A549 (cell line): ENCODE measurements at regions of chr16 and their contacts with region 1.

Region 1: GRCh38 chr16:11396241-11397048 is 51.2 kb downstream of the RMI2 start:
- DNase-seq: peak; percentile 67 to 94
- ATAC-seq: peak; percentile 74 to 93
- H3K4me3 ChIP-seq: no peak overlapping the region
- H3K27ac ChIP-seq: peak overlapping the region; percentile 73 to 81
- H3K4me1 ChIP-seq: peaks cover 4% of the 10 kb centered on the region; the same call in 2 of the 3 replicates
- CTCF ChIP-seq: peak; percentile 93
- EP300 ChIP-seq: no peak
- POLR2A ChIP-seq: no peak
- RAD21 ChIP-seq: peak; percentile 99

Region 2: DNA sequence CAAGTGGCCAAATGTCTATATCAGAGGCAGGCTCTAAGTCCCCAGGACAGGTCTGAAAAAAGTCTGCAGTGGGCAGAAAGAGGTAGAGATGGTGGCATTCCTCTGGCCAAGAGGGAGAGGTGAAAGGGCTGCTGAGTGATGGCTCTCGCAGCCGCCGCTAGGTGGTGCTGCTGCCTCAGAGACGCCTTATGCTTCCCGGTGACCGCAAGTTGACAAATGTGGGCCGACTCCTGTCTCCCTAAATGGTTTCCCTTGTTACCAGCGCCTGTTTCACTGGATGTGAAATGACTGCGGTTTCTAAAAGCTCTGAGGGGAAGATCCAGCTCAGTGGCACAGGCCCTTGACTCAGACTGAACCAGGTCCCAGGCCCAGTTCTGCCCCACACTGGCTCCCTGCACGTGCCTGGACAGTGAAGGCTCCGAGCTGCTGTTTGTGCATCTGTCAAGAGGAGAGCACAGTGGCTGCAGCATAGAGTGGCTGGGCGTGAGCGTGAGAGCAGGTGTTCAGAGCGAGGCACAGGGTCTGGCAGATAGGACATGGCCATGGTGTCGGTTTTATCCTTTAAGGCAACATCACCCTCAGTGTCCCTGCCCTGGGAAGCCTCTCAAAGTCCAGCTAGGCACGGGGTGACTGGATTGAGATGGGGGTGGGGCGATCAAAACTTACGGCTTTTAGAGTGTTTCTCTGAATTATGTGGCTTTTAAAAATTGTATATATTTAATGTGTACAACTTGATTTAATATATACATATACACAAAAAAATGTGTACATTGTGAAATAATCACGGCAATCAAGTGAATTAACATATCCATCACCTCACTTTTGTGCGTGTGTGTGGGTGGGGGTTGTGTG is 432.2 kb before region 1 on chr16:
- CTCF ChIA-PET with region 1: interaction called, 16 read pairs
- POLR2A ChIA-PET with region 1: no interaction called
- DNase-seq: peak; percentile 70 to 77
- ATAC-seq: peak; percentile 93 to 99
- H3K4me3 ChIP-seq: no peak overlapping the region
- H3K27ac ChIP-seq: no peak overlapping the region
- H3K4me1 ChIP-seq: 0 out of 3 replicates have a peak, but pooled peaks cover 3% of the 10 kb centered on the region
- CTCF ChIP-seq: peak; percentile 93
- EP300 ChIP-seq: no peak
- POLR2A ChIP-seq: no peak
- RAD21 ChIP-seq: peak; percentile 87 to 88

Region 3: DNA sequence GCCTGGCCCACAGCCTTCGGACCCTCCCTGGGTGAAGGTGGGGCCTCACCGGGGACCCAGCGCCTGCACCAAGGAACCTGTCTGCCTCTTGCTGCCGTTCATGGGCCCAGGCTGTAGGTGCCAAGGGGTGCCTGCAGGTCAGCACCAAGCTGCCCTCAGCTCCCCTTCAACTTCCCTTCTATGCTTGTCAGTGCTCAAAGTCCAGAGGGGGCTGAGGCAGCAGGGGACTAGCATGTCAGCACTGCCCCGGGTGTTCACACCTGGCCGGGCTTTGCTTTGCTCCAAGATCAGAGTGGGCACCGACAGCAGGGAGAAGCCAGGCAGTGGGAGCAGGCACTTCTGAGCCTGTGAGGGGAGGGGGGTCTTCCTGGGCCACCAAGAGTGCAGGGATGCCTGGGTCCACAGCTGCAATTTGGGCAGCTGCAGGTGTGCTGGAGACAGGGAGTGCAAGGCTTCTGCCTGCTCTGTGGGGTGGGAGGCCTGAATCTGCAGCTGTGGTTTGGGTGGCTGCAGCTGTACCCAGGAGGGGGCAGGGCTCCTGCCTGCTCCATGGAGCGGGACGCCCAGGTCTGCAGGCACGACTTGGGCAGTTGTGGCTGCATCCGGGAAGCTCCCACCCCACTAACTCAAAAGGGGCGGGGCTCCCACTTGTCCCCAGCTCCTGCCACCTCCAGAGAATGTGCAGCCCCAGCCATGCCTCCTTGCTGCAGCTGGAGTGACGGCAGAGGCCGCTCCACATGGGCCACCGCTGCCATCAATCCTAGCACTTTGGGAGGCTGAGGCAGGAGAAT is 87.8 kb before region 1 on chr16:
- CTCF ChIA-PET with region 1: no interaction called
- POLR2A ChIA-PET with region 1: no interaction called
- DNase-seq: no peak
- ATAC-seq: peak in 1 of 2 experiments; percentile 20; a peak in 2 of 6 replicates
- H3K4me3 ChIP-seq: no peak overlapping the region
- H3K27ac ChIP-seq: no peak overlapping the region
- H3K4me1 ChIP-seq: peaks cover 15% of the 10 kb centered on the region
- CTCF ChIP-seq: no peak
- EP300 ChIP-seq: no peak
- POLR2A ChIP-seq: no peak
- RAD21 ChIP-seq: no peak

Region 4: GRCh38 chr16:11417487-11417886 is 21.0 kb after region 1 on chr16:
- CTCF ChIA-PET with region 1: interaction called, 300 read pairs
- POLR2A ChIA-PET with region 1: no interaction called
- DNase-seq: no peak
- ATAC-seq: no peak; a peak in 2 of 6 replicates
- H3K4me3 ChIP-seq: no peak overlapping the region
- H3K27ac ChIP-seq: no peak overlapping the region
- H3K4me1 ChIP-seq: no peaks in the 10 kb centered on the region
- CTCF ChIP-seq: no peak
- EP300 ChIP-seq: no peak
- POLR2A ChIP-seq: no peak
- RAD21 ChIP-seq: no peak

Region 5: GRCh38 chr16:11497851-11498289 is 101.4 kb after region 1 on chr16:
- CTCF ChIA-PET with region 1: interaction called, 14 read pairs
- POLR2A ChIA-PET with region 1: no interaction called
- DNase-seq: peak in 1 of 2 experiments; percentile 81
- ATAC-seq: peak in 1 of 2 experiments; percentile 38; a peak in 3 of 6 replicates
- H3K4me3 ChIP-seq: no peak overlapping the region
- H3K27ac ChIP-seq: peak overlapping the region; percentile 88 to 89
- H3K4me1 ChIP-seq: peaks cover 59% of the 10 kb centered on the region
- CTCF ChIP-seq: no peak
- EP300 ChIP-seq: no peak
- POLR2A ChIP-seq: no peak
- RAD21 ChIP-seq: no peak

Region 6: DNA sequence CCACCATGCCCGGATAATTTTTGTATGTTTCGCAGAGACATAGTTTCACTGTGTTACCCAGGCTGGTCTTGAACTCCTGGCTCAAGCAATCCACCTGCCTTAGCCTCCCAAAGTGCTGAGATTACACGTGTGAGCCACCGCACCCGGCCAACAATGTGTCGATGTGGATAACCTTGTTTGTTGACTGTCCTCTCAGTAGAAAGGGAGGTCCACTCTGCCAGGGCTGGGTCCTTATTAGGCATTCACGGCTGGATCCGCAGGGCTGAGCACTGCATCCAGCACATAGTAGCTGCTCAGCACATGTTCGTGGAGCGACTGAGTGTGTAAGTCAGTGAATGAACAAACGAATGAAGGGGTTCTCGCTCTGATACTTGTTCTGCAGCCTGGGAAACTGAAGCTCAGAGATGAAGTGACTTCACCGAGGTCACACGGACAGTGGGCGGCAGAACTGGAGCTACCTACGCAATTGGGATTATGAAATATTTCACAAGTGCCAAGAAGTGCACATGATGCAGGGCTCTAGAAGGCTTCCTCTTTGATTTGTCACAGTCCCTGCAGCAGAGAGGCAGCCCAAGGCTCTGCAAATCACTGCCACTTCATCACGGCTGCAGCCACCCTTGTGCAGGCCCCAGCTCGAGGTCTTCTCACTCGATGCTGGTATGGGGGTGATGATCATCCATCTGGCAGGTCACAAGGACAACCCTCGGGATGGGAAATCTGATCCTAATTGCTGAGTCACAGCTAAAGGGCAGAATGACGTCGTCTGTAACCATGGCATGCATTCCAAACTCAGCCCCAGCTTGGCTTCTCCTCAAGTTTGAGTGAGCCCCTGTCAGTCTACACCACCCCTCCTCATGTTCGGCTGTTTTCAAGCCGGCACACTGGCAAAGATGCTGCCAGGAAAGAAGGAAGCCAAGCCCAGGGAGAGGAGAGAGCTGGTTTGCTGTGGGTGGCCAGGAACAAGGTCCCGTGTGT is 243.8 kb after region 1 on chr16:
- CTCF ChIA-PET with region 1: interaction called, 16 read pairs
- POLR2A ChIA-PET with region 1: interaction called, 6 read pairs
- DNase-seq: peak; percentile 94 to 100
- ATAC-seq: peak; percentile 91 to 94
- H3K4me3 ChIP-seq: peak overlapping the region; percentile 32
- H3K27ac ChIP-seq: peak overlapping the region; percentile 99 to 100
- H3K4me1 ChIP-seq: peaks cover 57% of the 10 kb centered on the region
- CTCF ChIP-seq: no peak; the same call in 2 of the 3 replicates
- EP300 ChIP-seq: peak; percentile 97 to 98; a peak in 4 of 5 replicates
- POLR2A ChIP-seq: peak; percentile 43
- RAD21 ChIP-seq: peak; percentile 12 to 67; a peak in 4 of 5 replicates

Region 7: DNA sequence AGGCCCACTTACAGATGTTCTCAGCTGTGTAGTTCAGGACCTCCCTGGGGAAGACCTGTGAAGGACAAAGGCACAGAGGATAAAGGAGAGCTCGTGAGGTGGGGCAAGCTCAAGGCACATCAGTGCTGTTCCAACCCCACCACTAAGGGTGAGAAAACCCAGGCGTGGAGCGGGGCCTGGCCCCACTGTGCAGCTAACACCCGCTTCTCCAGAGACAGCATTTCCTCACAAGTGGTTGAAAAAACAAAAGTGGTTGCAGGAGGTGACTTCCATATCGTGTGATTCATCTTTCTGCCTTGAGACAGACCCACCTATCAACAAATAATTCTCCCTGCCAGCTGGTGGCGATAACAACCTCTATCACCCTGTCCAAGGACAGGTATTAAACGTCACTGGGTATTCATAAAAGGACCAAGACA is 301.8 kb after region 1 on chr16:
- CTCF ChIA-PET with region 1: interaction called, 16 read pairs
- POLR2A ChIA-PET with region 1: no interaction called
- DNase-seq: no peak
- ATAC-seq: peak in 1 of 2 experiments; percentile 54; a peak in 3 of 6 replicates
- H3K4me3 ChIP-seq: no peak overlapping the region
- H3K27ac ChIP-seq: peak overlapping the region; percentile 19 to 27; a peak in 1 of 6 replicates
- H3K4me1 ChIP-seq: peaks cover 27% of the 10 kb centered on the region
- CTCF ChIP-seq: peak; percentile 18; the same call in 2 of the 3 replicates
- EP300 ChIP-seq: no peak
- POLR2A ChIP-seq: no peak
- RAD21 ChIP-seq: no peak

Region 8: DNA sequence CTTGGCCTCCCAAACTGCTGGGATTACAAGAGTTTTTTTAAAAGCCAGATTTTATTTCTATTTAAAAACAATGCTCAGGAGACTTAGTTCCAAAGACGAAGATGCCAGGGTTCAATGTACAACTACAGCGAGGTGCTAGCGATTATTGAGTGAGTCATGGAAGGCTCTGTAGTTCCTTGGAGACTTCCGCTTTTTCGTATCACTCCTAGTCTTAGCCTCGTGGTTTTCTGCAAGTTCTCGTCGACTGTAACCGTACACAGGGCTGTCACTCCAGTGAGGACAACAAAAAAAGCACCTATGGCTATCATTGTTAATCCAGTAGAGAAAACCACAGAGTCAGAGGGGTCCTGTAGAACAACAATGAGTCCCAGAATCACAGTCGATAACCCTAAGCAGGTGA is 423.4 kb after region 1 on chr16:
- CTCF ChIA-PET with region 1: interaction called, 13 read pairs
- POLR2A ChIA-PET with region 1: no interaction called
- DNase-seq: no peak
- ATAC-seq: 0 out of 6 replicates have a peak, but pooled peaks of 1 of the 2 experiments have one; percentile 19
- H3K4me3 ChIP-seq: no peak overlapping the region
- H3K27ac ChIP-seq: no peak overlapping the region
- H3K4me1 ChIP-seq: 0 out of 3 replicates have a peak, but pooled peaks cover 4% of the 10 kb centered on the region
- CTCF ChIP-seq: no peak
- EP300 ChIP-seq: no peak
- POLR2A ChIP-seq: no peak
- RAD21 ChIP-seq: no peak